Naive thymus-derived CD4-positive, alpha-beta T cell (primary cell): ENCODE measurements at regions of chr9 and their contacts with region 1.

Region 1: DNA sequence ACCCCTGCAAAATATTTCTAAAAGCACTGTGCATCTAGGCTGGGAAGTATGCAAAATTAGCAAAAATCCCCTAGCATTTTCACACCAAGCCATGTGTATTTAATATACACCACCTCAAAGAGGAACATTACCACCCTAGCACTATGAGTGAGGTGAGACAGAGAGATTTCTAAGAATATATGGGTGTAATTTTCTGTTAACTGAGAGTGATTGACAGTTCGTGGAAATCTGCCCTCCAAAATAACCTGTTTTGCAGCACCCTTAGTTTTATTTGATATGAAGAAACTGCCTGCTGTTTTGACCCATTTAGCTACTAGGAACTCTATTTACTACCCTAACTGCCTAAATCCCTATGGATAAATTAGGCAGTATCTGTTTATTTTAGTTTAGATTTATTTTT is 64.2 kb upstream of the CDKN2B start:
- DNase-seq: no peak
- ATAC-seq: no peak
- H3K4me3 ChIP-seq: no peak overlapping the region
- H3K4me3 Mint-ChIP-seq: peak overlapping the region in 4 of 10 donors; percentile 15 to 63 (median 38)
- H3K27ac ChIP-seq: no peak overlapping the region
- H3K27ac Mint-ChIP-seq: peak overlapping the region in 3 of 9 donors; percentile 49 to 80 (median 53)
- H3K4me1 ChIP-seq: peaks cover 0 to 26% of the 10 kb centered on the region in 2 donors
- H3K4me1 Mint-ChIP-seq: peaks cover 15 to 57% (median 31%) of the 10 kb centered on the region in 7 donors
- H3K27me3 ChIP-seq: no peaks in the 10 kb centered on the region
- H3K27me3 Mint-ChIP-seq: peaks cover 0 to 44% (median 4%) of the 10 kb centered on the region in 5 donors

Region 2: GRCh38 chr9:21060919-21061561 is 1012.3 kb before region 1 on chr9:
- CTCF ChIA-PET with region 1: no interaction called
- POLR2A ChIA-PET with region 1: no interaction called
- intact Hi-C with region 1: no loop called
- DNase-seq: peak in 5 of 9 donors; percentile 19 to 29 (median 25)
- ATAC-seq: no peak
- H3K4me3 ChIP-seq: no peak overlapping the region
- H3K4me3 Mint-ChIP-seq: peak overlapping the region in 8 of 10 donors; percentile 3 to 74 (median 24)
- H3K27ac ChIP-seq: no peak overlapping the region
- H3K27ac Mint-ChIP-seq: peak overlapping the region in 8 of 9 donors; percentile 1 to 83 (median 54)
- H3K4me1 ChIP-seq: peaks cover 8 to 12% of the 10 kb centered on the region in 2 donors
- H3K4me1 Mint-ChIP-seq: peaks cover 14 to 26% (median 24%) of the 10 kb centered on the region in 7 donors
- H3K27me3 ChIP-seq: no peaks in the 10 kb centered on the region
- H3K27me3 Mint-ChIP-seq: peaks cover 0 to 3% (median 0%) of the 10 kb centered on the region in 5 donors

Region 3: GRCh38 chr9:21831961-21832509 is 241.3 kb before region 1 on chr9:
- CTCF ChIA-PET with region 1: no interaction called
- POLR2A ChIA-PET with region 1: no interaction called
- intact Hi-C with region 1: loop called in 1 of 2 experiments (anchors 5 kb)
- DNase-seq: peak in 1 of 9 donors; percentile 54
- ATAC-seq: peak; percentile 84
- H3K4me3 ChIP-seq: no peak overlapping the region
- H3K4me3 Mint-ChIP-seq: peak overlapping the region in 1 of 10 donors; percentile 16
- H3K27ac ChIP-seq: no peak overlapping the region
- H3K27ac Mint-ChIP-seq: peak overlapping the region in 2 of 9 donors; percentile 6 to 16
- H3K4me1 ChIP-seq: no peaks in the 10 kb centered on the region
- H3K4me1 Mint-ChIP-seq: peaks cover 0 to 53% (median 10%) of the 10 kb centered on the region in 7 donors
- H3K27me3 ChIP-seq: no peaks in the 10 kb centered on the region
- H3K27me3 Mint-ChIP-seq: no peaks in the 10 kb centered on the region

Region 4: DNA sequence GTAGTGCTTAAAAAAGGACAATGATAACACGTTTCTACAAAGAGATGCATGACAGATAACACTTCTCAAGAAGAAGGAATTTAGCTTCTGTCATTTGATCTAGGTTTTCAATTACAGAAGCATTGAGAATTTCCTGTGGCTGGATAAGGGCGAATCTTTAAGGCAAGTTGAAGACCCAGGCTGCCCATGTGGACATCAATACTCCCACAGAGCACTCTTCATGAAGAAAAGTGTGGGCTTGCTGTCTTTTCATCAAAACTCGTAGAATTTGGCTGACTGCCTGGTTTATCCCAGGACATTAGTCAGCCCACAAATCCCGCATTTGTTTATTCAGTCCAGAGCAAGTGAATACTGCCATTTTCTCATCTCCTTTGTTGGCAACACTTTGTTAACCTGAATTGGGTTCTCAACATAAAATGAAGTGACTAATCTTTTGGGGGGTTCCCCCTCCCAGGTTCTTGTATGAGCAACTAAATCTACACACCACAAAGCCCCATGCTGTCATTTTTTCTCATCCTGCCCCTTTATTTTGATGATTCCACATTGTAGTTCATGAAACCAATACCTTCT is 20.9 kb before region 1 on chr9:
- CTCF ChIA-PET with region 1: no interaction called
- POLR2A ChIA-PET with region 1: no interaction called
- intact Hi-C with region 1: loop called in 1 of 2 experiments (anchors 2 kb)
- DNase-seq: peak in 2 of 9 donors; percentile 10 to 34
- ATAC-seq: peak; percentile 49
- H3K4me3 ChIP-seq: no peak overlapping the region
- H3K4me3 Mint-ChIP-seq: peak overlapping the region in 2 of 10 donors; percentile 7 to 28
- H3K27ac ChIP-seq: no peak overlapping the region
- H3K27ac Mint-ChIP-seq: peak overlapping the region in 1 of 9 donors; percentile 70
- H3K4me1 ChIP-seq: peaks cover 14 to 23% of the 10 kb centered on the region in 2 donors
- H3K4me1 Mint-ChIP-seq: peaks cover 11 to 37% (median 29%) of the 10 kb centered on the region in 7 donors
- H3K27me3 ChIP-seq: no peaks in the 10 kb centered on the region
- H3K27me3 Mint-ChIP-seq: peaks cover 0 to 23% (median 0%) of the 10 kb centered on the region in 5 donors